ENCODE measurements at regions of chr2 and their contacts with region 1.

Region 1: DNA sequence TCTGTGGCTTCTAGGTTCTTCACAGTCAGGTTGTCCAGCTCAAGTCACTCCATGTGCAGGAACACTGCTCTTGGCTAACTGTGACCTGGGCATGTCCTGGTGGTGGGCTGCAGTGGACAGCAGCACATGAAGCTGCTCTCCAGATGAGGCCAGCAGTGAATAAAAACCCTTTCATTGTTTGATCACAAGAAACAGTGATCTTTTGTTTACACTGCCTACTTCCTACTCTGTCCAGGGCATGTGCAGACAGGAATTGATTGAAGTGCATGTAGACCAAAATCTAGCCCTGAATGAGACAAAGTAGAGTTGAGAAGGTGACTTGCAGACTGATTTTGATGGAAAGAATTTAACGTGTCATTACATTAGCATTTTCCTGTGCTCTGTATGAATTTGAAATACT is 34.9 kb downstream of the BCL2L11 start:
- DNase-seq: peak; percentile 81
- ATAC-seq: peak; percentile 86
- H3K4me3 ChIP-seq: no peak overlapping the region
- H3K27ac ChIP-seq: peak overlapping the region; percentile 36
- H3K4me1 ChIP-seq: peaks cover 52% of the 10 kb centered on the region
- H3K27me3 ChIP-seq: no peaks in the 10 kb centered on the region
- CTCF ChIP-seq: peak; percentile 24; the same call in 1 of the 2 replicates
- EP300 ChIP-seq: no peak
- POLR2A ChIP-seq: no peak
- RAD21 ChIP-seq: no peak

Region 2: GRCh38 chr2:111135910-111136297 is 19.7 kb before region 1 on chr2:
- CTCF ChIA-PET with region 1: no interaction called
- POLR2A ChIA-PET with region 1: no interaction called
- in situ Hi-C with region 1: no loop called
- intact Hi-C with region 1: loop called (anchors 2 kb)
- DNase-seq: peak; percentile 29
- ATAC-seq: peak; percentile 88
- H3K4me3 ChIP-seq: no peak overlapping the region
- H3K27ac ChIP-seq: no peak overlapping the region
- H3K4me1 ChIP-seq: peaks cover 27% of the 10 kb centered on the region
- H3K27me3 ChIP-seq: no peaks in the 10 kb centered on the region
- CTCF ChIP-seq: peak; percentile 62
- EP300 ChIP-seq: no peak
- POLR2A ChIP-seq: no peak
- RAD21 ChIP-seq: peak; percentile 51; the same call in 1 of the 2 replicates

Region 3: DNA sequence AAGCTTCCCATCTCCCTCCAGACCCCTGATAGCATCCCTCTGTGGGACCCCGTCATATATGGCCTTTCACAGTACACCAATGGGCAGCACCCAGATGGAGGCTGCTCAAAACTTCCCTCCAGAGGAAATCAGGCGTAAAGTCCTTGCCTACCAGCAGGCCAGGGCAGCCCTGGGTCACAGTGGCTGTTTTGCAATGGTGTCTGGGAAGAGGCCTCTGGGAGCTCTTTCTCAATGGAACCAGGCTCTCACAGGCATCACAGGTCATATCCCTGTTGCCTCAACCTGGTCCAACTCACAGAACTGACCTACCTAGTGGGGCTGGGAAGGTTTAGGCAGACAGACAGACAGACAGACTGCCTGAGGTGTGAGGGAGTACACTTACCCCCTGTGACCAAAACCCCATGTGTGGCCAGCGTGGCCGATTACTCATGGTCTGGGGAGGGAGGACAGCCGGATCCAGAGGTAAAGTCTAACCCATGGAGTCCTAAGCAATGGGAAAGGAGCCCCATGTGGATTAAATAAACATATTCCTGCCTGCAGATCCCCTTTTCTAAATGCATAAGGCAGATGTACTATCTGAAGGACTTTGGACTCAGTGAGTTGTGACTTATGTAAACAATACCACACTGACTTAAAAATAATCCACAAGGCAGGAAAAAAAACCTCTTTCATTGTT is 23.3 kb after region 1 on chr2:
- CTCF ChIA-PET with region 1: no interaction called
- POLR2A ChIA-PET with region 1: no interaction called
- in situ Hi-C with region 1: no loop called
- intact Hi-C with region 1: loop called (anchors 1 kb)
- DNase-seq: peak; percentile 94
- ATAC-seq: peak; percentile 85
- H3K4me3 ChIP-seq: peak overlapping the region in 2 of 3 experiments; percentile 8 to 56; a peak in 3 of 6 replicates
- H3K27ac ChIP-seq: peak overlapping the region; percentile 71
- H3K4me1 ChIP-seq: peaks cover 49% of the 10 kb centered on the region
- H3K27me3 ChIP-seq: 0 out of 5 replicates have a peak, but pooled peaks cover 0 to 3% of the 10 kb centered on the region in 2 experiments
- CTCF ChIP-seq: peak; percentile 28
- EP300 ChIP-seq: peak in 1 of 2 experiments; percentile 7; a peak in 1 of 4 replicates
- POLR2A ChIP-seq: peak in 1 of 2 experiments; percentile 37; a peak in 1 of 4 replicates
- RAD21 ChIP-seq: peak; percentile 43; the same call in 1 of the 2 replicates

Region 4: GRCh38 chr2:111227716-111228141 is 72.1 kb after region 1 on chr2:
- CTCF ChIA-PET with region 1: no interaction called
- POLR2A ChIA-PET with region 1: no interaction called
- in situ Hi-C with region 1: no loop called
- intact Hi-C with region 1: no loop called
- DNase-seq: peak; percentile 42
- ATAC-seq: peak; percentile 75
- H3K4me3 ChIP-seq: no peak overlapping the region
- H3K27ac ChIP-seq: no peak overlapping the region
- H3K4me1 ChIP-seq: no peaks in the 10 kb centered on the region
- H3K27me3 ChIP-seq: no peaks in the 10 kb centered on the region
- CTCF ChIP-seq: no peak
- EP300 ChIP-seq: no peak
- POLR2A ChIP-seq: no peak
- RAD21 ChIP-seq: no peak

Measured in HepG2 (cell line).